Activated B cell treated with CpG ODN at 0.5 μM for 24 hours (primary cell): ENCODE measurements at regions of chr17 and their contacts with region 1.

Region 1: GRCh38 chr17:51260125-51260880 is at the start of gene UTP18:
- DNase-seq: peak; percentile 93
- ATAC-seq: peak; percentile 87
- H3K4me3 Mint-ChIP-seq: peak within 1 kb of the TSS; percentile 95
- H3K27ac Mint-ChIP-seq: peak within 1 kb of the TSS; percentile 99
- H3K4me1 Mint-ChIP-seq: peaks cover 63% of the 10 kb centered on the region
- H3K27me3 Mint-ChIP-seq: no peaks in the 10 kb centered on the region
- CTCF ChIP-seq: no peak
- total RNA-seq, gene UTP18: 37.0 and 39.1 TPM in 2 replicates

Region 2: GRCh38 chr17:51000835-51001638 is 259.3 kb before region 1 on chr17:
- CTCF ChIA-PET with region 1: no interaction called
- POLR2A ChIA-PET with region 1: no interaction called
- intact Hi-C with region 1: loop called (anchors 1 kb)
- DNase-seq: no peak
- ATAC-seq: peak; percentile 67
- H3K4me3 Mint-ChIP-seq: no peak overlapping the region
- H3K27ac Mint-ChIP-seq: no peak overlapping the region
- H3K4me1 Mint-ChIP-seq: no peaks in the 10 kb centered on the region
- H3K27me3 Mint-ChIP-seq: no peaks in the 10 kb centered on the region
- CTCF ChIP-seq: no peak

Region 3: GRCh38 chr17:51079049-51079448 is 181.3 kb before region 1 on chr17:
- CTCF ChIA-PET with region 1: no interaction called
- POLR2A ChIA-PET with region 1: interaction called, 11 read pairs
- intact Hi-C with region 1: no loop called
- DNase-seq: no peak
- ATAC-seq: no peak
- H3K4me3 Mint-ChIP-seq: no peak overlapping the region
- H3K27ac Mint-ChIP-seq: no peak overlapping the region
- H3K4me1 Mint-ChIP-seq: peaks cover 13% of the 10 kb centered on the region
- H3K27me3 Mint-ChIP-seq: no peaks in the 10 kb centered on the region
- CTCF ChIP-seq: no peak

Region 4: GRCh38 chr17:51153210-51154072 is 106.9 kb before region 1 on chr17 and contains the start of gene NME1:
- CTCF ChIA-PET with region 1: no interaction called
- POLR2A ChIA-PET with region 1: no interaction called
- intact Hi-C with region 1: loop called (anchors 1 kb)
- DNase-seq: peak; percentile 99
- ATAC-seq: peak; percentile 88
- H3K4me3 Mint-ChIP-seq: no peak within 1 kb of the TSS
- H3K27ac Mint-ChIP-seq: no peak within 1 kb of the TSS
- H3K4me1 Mint-ChIP-seq: peaks cover 7% of the 10 kb centered on the region
- H3K27me3 Mint-ChIP-seq: no peaks in the 10 kb centered on the region
- CTCF ChIP-seq: no peak
- total RNA-seq, gene NME1: 130 and 138 TPM in 2 replicates

Region 5: GRCh38 chr17:51238255-51238887 is 21.9 kb before region 1 on chr17:
- CTCF ChIA-PET with region 1: no interaction called
- POLR2A ChIA-PET with region 1: interaction called, 5 read pairs
- intact Hi-C with region 1: loop called (anchors 1 kb)
- DNase-seq: no peak
- ATAC-seq: peak; percentile 93
- H3K4me3 Mint-ChIP-seq: peak overlapping the region; percentile 71
- H3K27ac Mint-ChIP-seq: peak overlapping the region; percentile 77
- H3K4me1 Mint-ChIP-seq: peaks cover 33% of the 10 kb centered on the region
- H3K27me3 Mint-ChIP-seq: no peaks in the 10 kb centered on the region
- CTCF ChIP-seq: no peak

Region 6: DNA sequence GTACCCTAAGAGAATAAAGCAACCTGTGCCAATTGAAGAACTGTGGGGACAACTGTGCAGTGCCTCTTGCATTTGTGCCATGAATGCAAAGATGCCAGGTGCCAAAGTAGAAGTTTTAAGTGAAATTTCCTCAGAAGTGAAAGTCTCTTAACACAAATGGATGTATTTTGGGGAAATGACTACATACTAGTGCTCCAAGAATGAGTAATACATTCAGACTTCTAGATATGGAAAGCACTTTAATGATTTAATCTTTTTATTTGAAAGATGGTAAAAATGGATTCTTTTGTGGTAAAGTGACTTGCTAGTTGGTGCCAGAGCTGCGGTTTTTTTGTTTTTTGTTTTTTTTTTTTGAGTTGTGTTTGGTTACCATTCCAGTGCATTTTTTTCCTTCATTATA is 15.1 kb after region 1 on chr17:
- CTCF ChIA-PET with region 1: no interaction called
- POLR2A ChIA-PET with region 1: no interaction called
- intact Hi-C with region 1: no loop called
- DNase-seq: no peak
- ATAC-seq: no peak
- H3K4me3 Mint-ChIP-seq: no peak overlapping the region
- H3K27ac Mint-ChIP-seq: no peak overlapping the region
- H3K4me1 Mint-ChIP-seq: no peaks in the 10 kb centered on the region
- H3K27me3 Mint-ChIP-seq: no peaks in the 10 kb centered on the region
- CTCF ChIP-seq: no peak